Activated B cell treated with CpG ODN at 0.5 μM for 24 hours (primary cell): ENCODE measurements at regions of chr18 and their contacts with region 1.

Region 1: GRCh38 chr18:57881818-57882413 is 78.8 kb upstream of the ATP8B1 start:
- DNase-seq: peak; percentile 37
- ATAC-seq: peak; percentile 99
- H3K4me3 Mint-ChIP-seq: no peak overlapping the region
- H3K27ac Mint-ChIP-seq: no peak overlapping the region
- H3K4me1 Mint-ChIP-seq: peaks cover 8% of the 10 kb centered on the region
- H3K27me3 Mint-ChIP-seq: no peaks in the 10 kb centered on the region
- CTCF ChIP-seq: peak; percentile 79

Region 2: GRCh38 chr18:57951117-57951796 is 69.3 kb after region 1 on chr18:
- CTCF ChIA-PET with region 1: interaction called, 3 read pairs
- POLR2A ChIA-PET with region 1: no interaction called
- intact Hi-C with region 1: loop called (anchors 5 kb)
- DNase-seq: no peak
- ATAC-seq: peak; percentile 76
- H3K4me3 Mint-ChIP-seq: no peak overlapping the region
- H3K27ac Mint-ChIP-seq: peak overlapping the region; percentile 43
- H3K4me1 Mint-ChIP-seq: peaks cover 15% of the 10 kb centered on the region
- H3K27me3 Mint-ChIP-seq: no peaks in the 10 kb centered on the region
- CTCF ChIP-seq: no peak

Region 3: GRCh38 chr18:57959278-57959677 is 77.4 kb after region 1 on chr18:
- CTCF ChIA-PET with region 1: interaction called, 14 read pairs
- POLR2A ChIA-PET with region 1: interaction called, 3 read pairs
- intact Hi-C with region 1: loop called (anchors 5 kb)
- DNase-seq: no peak
- ATAC-seq: peak; percentile 88
- H3K4me3 Mint-ChIP-seq: no peak overlapping the region
- H3K27ac Mint-ChIP-seq: no peak overlapping the region
- H3K4me1 Mint-ChIP-seq: no peaks in the 10 kb centered on the region
- H3K27me3 Mint-ChIP-seq: no peaks in the 10 kb centered on the region
- CTCF ChIP-seq: no peak

Region 4: DNA sequence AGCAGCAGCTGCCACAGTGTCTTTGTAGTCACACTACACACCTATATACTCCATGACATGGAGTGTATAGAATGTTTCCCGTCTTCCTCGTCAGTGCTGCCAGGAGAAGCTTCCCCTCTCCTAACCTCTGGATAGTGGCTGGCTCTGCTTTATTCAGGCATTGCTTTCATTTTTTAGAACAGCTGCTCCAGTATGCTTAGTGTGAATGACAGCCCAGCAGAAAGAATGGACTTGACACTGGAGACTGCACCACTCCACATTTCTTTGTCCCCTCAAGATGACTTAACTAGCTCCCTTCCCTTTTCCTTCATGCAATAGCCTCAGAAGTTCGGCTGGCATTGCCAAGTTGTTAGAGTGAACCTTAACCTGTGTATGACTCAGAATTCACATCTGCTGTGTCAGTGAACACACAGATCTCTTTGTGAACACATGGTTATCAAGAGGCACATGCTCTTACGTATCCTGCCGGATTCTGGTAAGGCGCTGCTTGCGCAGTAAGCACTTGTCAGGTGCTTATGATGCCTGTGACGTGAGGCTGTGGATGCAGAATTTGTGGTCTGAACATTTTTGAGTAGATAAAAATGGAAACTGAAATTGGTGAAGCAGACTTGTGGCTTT is 236.0 kb after region 1 on chr18:
- CTCF ChIA-PET with region 1: interaction called, 47 read pairs
- POLR2A ChIA-PET with region 1: interaction called, 4 read pairs
- intact Hi-C with region 1: loop called (anchors 1 kb)
- DNase-seq: no peak
- ATAC-seq: no peak
- H3K4me3 Mint-ChIP-seq: no peak overlapping the region
- H3K27ac Mint-ChIP-seq: no peak overlapping the region
- H3K4me1 Mint-ChIP-seq: peaks cover 10% of the 10 kb centered on the region
- H3K27me3 Mint-ChIP-seq: no peaks in the 10 kb centered on the region
- CTCF ChIP-seq: no peak

Region 5: GRCh38 chr18:58135701-58136331 is 253.9 kb after region 1 on chr18:
- CTCF ChIA-PET with region 1: interaction called, 7 read pairs
- POLR2A ChIA-PET with region 1: no interaction called
- intact Hi-C with region 1: loop called (anchors 1 kb)
- DNase-seq: peak; percentile 25
- ATAC-seq: peak; percentile 65
- H3K4me3 Mint-ChIP-seq: peak overlapping the region; percentile 52
- H3K27ac Mint-ChIP-seq: peak overlapping the region; percentile 3
- H3K4me1 Mint-ChIP-seq: peaks cover 33% of the 10 kb centered on the region
- H3K27me3 Mint-ChIP-seq: no peaks in the 10 kb centered on the region
- CTCF ChIP-seq: no peak

Region 6: DNA sequence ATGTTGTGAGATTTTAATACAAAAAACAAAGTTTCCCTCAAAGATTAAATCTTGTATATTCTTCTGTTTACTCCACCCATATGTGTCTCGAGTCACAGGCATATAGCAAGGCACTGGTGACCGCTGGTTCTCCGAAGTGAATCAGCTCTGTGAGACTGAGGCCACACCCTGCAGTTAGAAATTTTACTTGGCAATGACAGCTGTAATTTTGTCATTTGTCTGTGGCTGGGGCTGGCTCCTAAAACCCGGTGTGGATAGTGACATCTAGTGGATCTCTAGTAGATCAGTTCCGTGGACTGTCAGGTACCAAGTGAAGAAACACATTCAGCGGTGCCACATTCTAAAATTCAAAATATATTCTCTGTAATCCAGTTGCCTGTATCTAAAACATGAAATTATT is 440.1 kb after region 1 on chr18:
- CTCF ChIA-PET with region 1: interaction called, 3 read pairs
- POLR2A ChIA-PET with region 1: no interaction called
- intact Hi-C with region 1: loop called (anchors 1 kb)
- DNase-seq: no peak
- ATAC-seq: peak; percentile 77
- H3K4me3 Mint-ChIP-seq: no peak overlapping the region
- H3K27ac Mint-ChIP-seq: no peak overlapping the region
- H3K4me1 Mint-ChIP-seq: peaks cover 11% of the 10 kb centered on the region
- H3K27me3 Mint-ChIP-seq: no peaks in the 10 kb centered on the region
- CTCF ChIP-seq: no peak

Region 7: GRCh38 chr18:58493516-58494253 is 611.8 kb after region 1 on chr18:
- CTCF ChIA-PET with region 1: interaction called, 3 read pairs
- POLR2A ChIA-PET with region 1: no interaction called
- intact Hi-C with region 1: loop called (anchors 5 kb)
- DNase-seq: peak; percentile 27
- ATAC-seq: peak; percentile 87
- H3K4me3 Mint-ChIP-seq: no peak overlapping the region
- H3K27ac Mint-ChIP-seq: no peak overlapping the region
- H3K4me1 Mint-ChIP-seq: peaks cover 7% of the 10 kb centered on the region
- H3K27me3 Mint-ChIP-seq: peaks cover 37% of the 10 kb centered on the region
- CTCF ChIP-seq: peak; percentile 55